Mucosa of descending colon (tissue), 3 donors: ENCODE measurements at regions of chr14 and their contacts with region 1.

Region 1: GRCh38 chr14:101964297-101965144 is at the start of gene DYNC1H1:
- DNase-seq: peak; percentile 90 to 94 (median 94)
- ATAC-seq: peak; percentile 95
- H3K4me3 ChIP-seq: peak within 1 kb of the TSS; percentile 94
- H3K4me1 ChIP-seq: peaks cover 27% of the 10 kb centered on the region
- CTCF ChIP-seq: no peak
- total RNA-seq, gene DYNC1H1: 403 to 547 (median 409) TPM

Region 2: DNA sequence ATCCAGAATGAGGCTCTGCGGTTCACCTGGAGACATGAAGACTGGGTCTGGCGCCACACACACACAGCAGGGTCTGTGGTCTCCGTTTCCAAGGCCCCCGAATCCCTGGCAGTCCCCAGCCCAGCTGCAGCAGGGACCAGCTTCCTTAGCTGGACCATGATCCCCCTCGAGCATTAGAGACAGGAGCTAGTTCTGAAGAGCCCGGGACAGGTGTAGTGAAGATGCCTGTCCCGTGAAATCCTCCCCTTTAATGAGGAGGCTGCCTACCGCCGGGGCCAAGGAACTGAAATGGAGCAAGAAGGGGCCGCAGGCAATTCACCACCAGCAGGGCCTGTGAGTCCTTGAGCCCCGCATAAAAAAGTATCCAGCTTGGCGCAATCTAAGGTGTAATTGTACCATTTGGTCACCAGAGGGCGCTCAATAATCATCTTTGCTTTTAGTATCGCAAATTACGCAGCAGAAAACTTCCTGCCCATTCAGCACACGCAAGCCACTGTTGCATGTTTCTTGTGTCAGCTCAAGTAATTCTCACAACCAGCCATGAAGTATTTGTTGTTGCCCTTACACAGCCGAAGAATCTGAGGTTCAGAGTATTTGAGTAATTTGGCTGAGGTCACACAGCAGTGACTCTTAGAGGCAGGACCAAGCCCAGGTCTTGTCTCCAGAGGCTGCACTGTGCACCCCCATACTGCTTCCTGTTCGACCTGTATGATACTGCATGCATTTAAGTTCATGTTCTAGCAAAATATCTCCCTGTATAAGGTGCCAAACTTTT is 257.3 kb before region 1 on chr14:
- intact Hi-C with region 1: loop called in 1 of 2 experiments (anchors 5 kb)
- DNase-seq: peak in 2 of 3 donors; percentile 53 to 63
- ATAC-seq: peak; percentile 77
- H3K4me3 ChIP-seq: no peak overlapping the region
- H3K4me1 ChIP-seq: peaks cover 13% of the 10 kb centered on the region
- CTCF ChIP-seq: peak; percentile 62

Region 3: DNA sequence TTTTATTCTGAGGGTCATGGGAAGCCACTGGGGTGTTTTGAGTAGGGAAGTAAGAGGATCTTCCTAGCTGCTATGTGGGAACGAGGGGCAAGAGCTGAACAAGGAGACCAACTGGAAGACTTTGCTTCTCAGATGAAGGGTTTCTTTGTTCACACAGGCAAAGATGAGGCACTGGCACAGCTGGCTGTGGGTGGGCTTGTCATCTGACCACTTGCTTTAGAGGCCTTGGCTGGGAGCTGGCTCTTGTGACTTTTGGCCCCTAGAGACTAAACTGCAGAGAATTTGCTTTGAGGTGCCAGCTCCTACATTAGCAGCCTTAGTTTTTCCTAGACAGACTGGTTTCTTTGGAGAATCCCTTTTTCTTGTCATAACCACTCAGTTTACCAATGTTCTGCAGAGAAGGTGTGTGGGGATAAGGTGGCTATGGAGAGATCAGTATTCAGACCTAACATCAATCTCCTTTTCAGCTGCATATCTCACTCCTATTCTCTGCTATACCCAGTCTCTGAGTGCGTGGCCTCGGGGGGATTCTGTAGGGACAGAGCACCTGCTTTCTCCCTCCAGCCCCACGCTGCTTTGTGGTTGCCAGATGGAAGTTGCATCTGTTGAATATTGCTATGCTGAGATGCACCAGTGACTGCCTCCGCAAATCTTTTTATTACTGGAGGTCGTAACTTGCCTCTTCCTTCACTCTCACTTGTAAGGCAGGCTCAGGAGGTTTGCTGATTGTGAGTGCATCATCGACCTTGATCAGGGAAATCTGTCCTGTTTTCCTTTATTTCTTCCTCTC is 190.3 kb before region 1 on chr14:
- intact Hi-C with region 1: loop called in 1 of 2 experiments (anchors 5 kb)
- DNase-seq: no peak
- ATAC-seq: no peak
- H3K4me3 ChIP-seq: no peak overlapping the region
- H3K4me1 ChIP-seq: no peaks in the 10 kb centered on the region
- CTCF ChIP-seq: no peak

Region 4: GRCh38 chr14:101947906-101948665 is 16.4 kb before region 1 on chr14:
- intact Hi-C with region 1: loop called in 1 of 2 experiments (anchors 2 kb)
- DNase-seq: peak; percentile 100
- ATAC-seq: peak; percentile 98
- H3K4me3 ChIP-seq: peak overlapping the region; percentile 49
- H3K4me1 ChIP-seq: peaks cover 8% of the 10 kb centered on the region
- CTCF ChIP-seq: no peak

Region 5: GRCh38 chr14:102096214-102097114 is 131.9 kb after region 1 on chr14:
- intact Hi-C with region 1: loop called in 1 of 2 experiments (anchors 2 kb)
- DNase-seq: peak; percentile 75 to 96 (median 90)
- ATAC-seq: peak; percentile 86
- H3K4me3 ChIP-seq: no peak overlapping the region
- H3K4me1 ChIP-seq: peaks cover 3% of the 10 kb centered on the region
- CTCF ChIP-seq: peak; percentile 54